ENCODE measurements at regions of chr12 and their contacts with region 1.

Region 1: DNA sequence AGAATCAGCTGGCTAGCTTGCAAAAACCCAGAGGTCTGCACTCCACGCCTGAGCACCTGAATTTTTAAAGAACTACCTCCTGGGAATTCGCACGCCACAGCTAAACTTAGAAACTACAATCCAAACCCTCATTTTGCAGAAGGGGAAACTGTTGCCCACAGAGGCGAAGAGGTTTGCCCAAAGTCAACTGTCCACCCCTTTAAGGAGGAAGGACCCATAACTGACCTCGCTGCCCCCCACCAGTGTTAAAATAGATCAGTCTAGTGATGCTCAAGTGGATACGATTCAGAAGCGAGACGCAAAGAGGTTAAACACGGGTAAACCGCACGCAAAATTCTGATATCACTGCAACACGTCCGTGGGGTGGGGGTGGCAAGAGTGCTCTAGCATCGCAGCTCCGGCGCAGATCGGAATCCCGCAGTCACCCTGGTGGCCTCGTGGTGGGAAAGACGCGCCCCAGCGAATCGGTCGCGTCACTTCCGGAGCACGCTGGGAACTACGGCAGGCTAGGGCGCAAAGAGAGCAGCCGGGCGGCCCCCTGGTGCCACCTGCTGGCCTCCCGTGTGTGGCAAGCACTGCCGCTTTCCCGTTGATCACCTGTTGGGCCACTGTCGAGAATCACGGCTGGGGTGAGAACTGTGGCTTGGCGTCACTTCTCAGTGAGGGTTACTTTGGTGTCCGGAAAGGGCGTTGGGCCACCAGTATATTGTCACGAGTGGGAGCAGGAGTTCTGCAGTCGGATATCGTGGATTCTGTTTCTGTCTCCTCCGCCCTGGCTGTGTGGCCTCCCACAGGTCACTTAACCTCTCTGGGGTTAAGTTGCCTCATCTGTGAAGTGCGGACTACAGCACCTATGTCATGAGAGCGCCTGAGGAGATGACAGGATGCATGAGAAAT is at the start of gene ALKBH2:
- DNase-seq: peak; percentile 89 to 99 (median 95)
- ATAC-seq: peak; percentile 77
- H3K4me3 ChIP-seq: peak within 1 kb of the TSS; percentile 63 to 78
- H3K4me3 Mint-ChIP-seq: peak within 1 kb of the TSS; percentile 83
- H3K27ac ChIP-seq: peak within 1 kb of the TSS; percentile 65 to 69
- H3K27ac Mint-ChIP-seq: peak within 1 kb of the TSS; percentile 91
- H3K4me1 ChIP-seq: peaks cover 27% of the 10 kb centered on the region
- H3K4me1 Mint-ChIP-seq: peaks cover 40% of the 10 kb centered on the region
- H3K27me3 ChIP-seq: no peaks in the 10 kb centered on the region
- H3K27me3 Mint-ChIP-seq: no peaks in the 10 kb centered on the region
- CTCF ChIP-seq: peak; percentile 94
- total RNA-seq, gene ALKBH2: 9.8 to 12.8 TPM

Region 2: GRCh38 chr12:107760809-107761501 is 1332.3 kb before region 1 on chr12 and contains the start of gene PRDM4:
- CTCF ChIA-PET with region 1: no interaction called
- POLR2A ChIA-PET with region 1: no interaction called
- intact Hi-C with region 1: loop called in 1 of 2 experiments (anchors 5 kb)
- DNase-seq: peak; percentile 76 to 97 (median 88)
- ATAC-seq: peak; percentile 95
- H3K4me3 ChIP-seq: peak within 1 kb of the TSS; percentile 76 to 82
- H3K4me3 Mint-ChIP-seq: peak within 1 kb of the TSS; percentile 89
- H3K27ac ChIP-seq: peak within 1 kb of the TSS; percentile 80 to 83
- H3K27ac Mint-ChIP-seq: peak within 1 kb of the TSS; percentile 90
- H3K4me1 ChIP-seq: peaks cover 31% of the 10 kb centered on the region
- H3K4me1 Mint-ChIP-seq: peaks cover 44% of the 10 kb centered on the region
- H3K27me3 ChIP-seq: no peaks in the 10 kb centered on the region
- H3K27me3 Mint-ChIP-seq: no peaks in the 10 kb centered on the region
- CTCF ChIP-seq: no peak
- total RNA-seq, gene PRDM4: 44.9 to 46.0 TPM

Region 3: DNA sequence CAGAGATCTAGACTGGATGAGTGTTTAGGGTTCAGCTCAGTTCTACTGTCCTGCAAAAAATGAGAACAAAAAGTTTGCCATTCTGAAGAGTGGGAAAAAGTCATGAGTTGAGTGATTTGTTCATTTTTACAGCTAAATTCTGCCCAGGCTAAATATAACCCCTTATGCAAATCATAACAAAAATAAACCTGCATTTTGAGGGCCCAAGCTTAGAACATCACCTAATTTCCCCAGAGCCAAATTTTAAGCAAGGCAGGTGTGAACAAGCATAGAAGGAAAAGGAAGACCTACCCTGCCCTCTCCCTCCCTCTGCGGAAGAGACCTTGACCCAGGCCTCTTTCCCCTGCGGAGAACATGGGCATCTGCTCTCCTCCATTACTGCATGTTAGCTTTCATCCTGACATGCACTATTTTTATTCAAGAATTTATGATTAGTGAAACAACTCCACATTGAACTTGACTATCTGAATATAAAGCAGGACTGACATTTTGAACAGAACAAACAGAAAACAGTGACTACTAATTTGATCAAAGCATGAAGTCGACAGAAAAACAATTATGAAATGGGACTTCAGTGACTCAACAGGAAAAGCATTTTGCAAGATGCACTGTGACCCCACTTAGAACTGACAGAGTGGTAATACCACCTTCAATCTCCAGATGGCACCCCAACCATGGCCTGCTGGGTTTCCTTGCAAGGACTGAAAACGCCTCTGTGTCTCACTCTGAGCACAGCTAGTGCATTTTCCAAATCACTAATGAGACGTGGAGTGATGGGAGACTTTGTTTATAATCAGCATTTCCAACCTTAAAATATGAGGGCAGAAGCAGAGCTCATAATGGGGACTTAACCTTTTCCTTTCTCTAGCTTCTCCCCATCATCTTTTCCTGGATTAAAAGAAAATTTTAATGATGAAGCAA is 428.7 kb before region 1 on chr12:
- CTCF ChIA-PET with region 1: interaction called, 5 read pairs
- POLR2A ChIA-PET with region 1: interaction called, 3 read pairs
- intact Hi-C with region 1: loop called (anchors 2 kb)
- DNase-seq: peak; percentile 70 to 89 (median 83)
- ATAC-seq: peak; percentile 100
- H3K4me3 ChIP-seq: no peak overlapping the region
- H3K4me3 Mint-ChIP-seq: no peak overlapping the region
- H3K27ac ChIP-seq: peak overlapping the region in 1 of 2 experiments; percentile 31
- H3K27ac Mint-ChIP-seq: peak overlapping the region; percentile 79
- H3K4me1 ChIP-seq: peaks cover 5% of the 10 kb centered on the region
- H3K4me1 Mint-ChIP-seq: peaks cover 15% of the 10 kb centered on the region
- H3K27me3 ChIP-seq: no peaks in the 10 kb centered on the region
- H3K27me3 Mint-ChIP-seq: no peaks in the 10 kb centered on the region
- CTCF ChIP-seq: peak; percentile 92

Region 4: DNA sequence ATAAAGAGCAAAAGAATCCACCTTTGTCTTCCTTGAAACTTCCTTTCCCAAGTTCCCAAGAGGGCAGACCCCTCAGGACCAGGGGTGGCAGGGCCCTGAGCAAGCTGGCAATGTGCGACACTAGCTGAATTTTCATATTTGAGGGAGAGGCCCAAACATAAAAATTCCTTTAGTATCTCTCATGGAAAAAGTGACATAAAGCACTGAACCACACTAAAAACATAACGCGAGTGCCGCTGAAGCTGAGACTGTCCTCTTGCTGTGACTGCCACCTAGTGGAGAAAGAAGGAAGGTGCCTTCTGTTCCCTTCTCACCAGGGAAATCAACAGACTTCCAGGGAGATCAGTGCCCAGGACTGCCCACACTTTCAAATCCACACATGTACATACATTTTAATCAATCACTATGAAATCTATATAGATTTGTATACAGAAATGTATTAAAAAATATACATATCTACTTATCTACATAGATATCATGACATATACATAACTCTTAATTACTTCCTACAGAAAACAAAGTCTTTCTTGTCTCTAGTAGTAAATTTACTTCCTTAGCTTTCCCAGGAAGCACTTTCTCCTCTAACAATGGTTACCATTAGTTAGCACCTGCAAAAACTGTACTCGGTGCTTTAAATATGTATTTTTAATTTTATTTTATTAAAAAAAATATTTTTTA is 289.7 kb before region 1 on chr12:
- CTCF ChIA-PET with region 1: interaction called, 7 read pairs
- POLR2A ChIA-PET with region 1: no interaction called
- intact Hi-C with region 1: loop called (anchors 1 kb)
- DNase-seq: peak; percentile 44 to 84 (median 68)
- ATAC-seq: peak; percentile 95
- H3K4me3 ChIP-seq: no peak overlapping the region
- H3K4me3 Mint-ChIP-seq: no peak overlapping the region
- H3K27ac ChIP-seq: no peak overlapping the region
- H3K27ac Mint-ChIP-seq: peak overlapping the region; percentile 14
- H3K4me1 ChIP-seq: no peaks in the 10 kb centered on the region
- H3K4me1 Mint-ChIP-seq: peaks cover 4% of the 10 kb centered on the region
- H3K27me3 ChIP-seq: no peaks in the 10 kb centered on the region
- H3K27me3 Mint-ChIP-seq: no peaks in the 10 kb centered on the region
- CTCF ChIP-seq: peak; percentile 94

Region 5: DNA sequence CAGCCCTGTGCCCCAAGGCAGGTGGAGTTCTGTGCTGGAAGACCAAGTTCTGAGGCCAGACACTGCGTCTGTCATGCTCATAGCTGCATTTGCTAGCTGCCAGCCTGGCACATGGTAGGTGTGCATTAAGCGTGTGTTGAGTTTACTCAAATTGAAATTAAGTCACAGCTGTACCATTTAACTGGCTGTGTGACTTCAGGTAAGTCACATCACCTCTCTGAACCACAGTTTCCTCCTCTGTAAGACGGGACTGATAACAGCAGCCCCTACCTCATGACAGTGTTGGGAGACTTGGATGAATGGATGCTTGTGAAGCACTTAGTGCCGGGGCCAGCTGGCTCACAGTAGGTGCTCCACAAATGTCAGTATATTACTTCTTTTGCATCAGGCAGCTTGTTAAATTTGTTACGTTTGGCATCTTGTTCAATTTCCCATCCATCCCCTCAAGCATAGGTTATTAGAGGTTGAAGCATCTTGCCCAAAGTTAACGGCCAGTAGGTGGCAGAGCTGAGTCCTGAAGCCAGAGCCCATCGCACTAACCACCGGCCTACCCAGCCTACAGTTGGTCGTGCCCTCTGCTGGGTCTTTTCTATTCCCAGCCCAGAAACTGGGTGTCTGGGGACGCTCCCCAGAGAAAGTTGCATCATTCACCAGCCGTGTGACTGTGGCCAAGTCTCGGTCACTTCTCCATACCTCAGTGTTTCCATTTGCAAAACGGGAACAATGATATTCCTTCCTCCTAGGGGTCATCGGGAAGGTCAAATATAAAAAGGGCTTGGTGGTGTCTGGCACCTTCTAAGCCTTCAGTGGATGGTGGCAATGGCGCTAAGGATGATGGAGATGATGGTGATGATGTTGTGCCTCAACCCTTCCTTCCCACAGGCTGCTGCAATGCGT is 208.9 kb before region 1 on chr12:
- CTCF ChIA-PET with region 1: interaction called, 46 read pairs
- POLR2A ChIA-PET with region 1: no interaction called
- intact Hi-C with region 1: loop called (anchors 1 kb)
- DNase-seq: peak; percentile 39 to 74 (median 62)
- ATAC-seq: peak; percentile 70
- H3K4me3 ChIP-seq: no peak overlapping the region
- H3K4me3 Mint-ChIP-seq: no peak overlapping the region
- H3K27ac ChIP-seq: no peak overlapping the region
- H3K27ac Mint-ChIP-seq: no peak overlapping the region
- H3K4me1 ChIP-seq: no peaks in the 10 kb centered on the region
- H3K4me1 Mint-ChIP-seq: no peaks in the 10 kb centered on the region
- H3K27me3 ChIP-seq: no peaks in the 10 kb centered on the region
- H3K27me3 Mint-ChIP-seq: peaks cover 4% of the 10 kb centered on the region
- CTCF ChIP-seq: peak; percentile 39

Region 6: GRCh38 chr12:108964371-108965352 is 128.6 kb before region 1 on chr12:
- CTCF ChIA-PET with region 1: no interaction called
- POLR2A ChIA-PET with region 1: no interaction called
- intact Hi-C with region 1: no loop called
- DNase-seq: no peak
- ATAC-seq: no peak
- H3K4me3 ChIP-seq: no peak overlapping the region
- H3K4me3 Mint-ChIP-seq: no peak overlapping the region
- H3K27ac ChIP-seq: no peak overlapping the region
- H3K27ac Mint-ChIP-seq: no peak overlapping the region
- H3K4me1 ChIP-seq: no peaks in the 10 kb centered on the region
- H3K4me1 Mint-ChIP-seq: no peaks in the 10 kb centered on the region
- H3K27me3 ChIP-seq: no peaks in the 10 kb centered on the region
- H3K27me3 Mint-ChIP-seq: peaks cover 6% of the 10 kb centered on the region
- CTCF ChIP-seq: no peak

Region 7: GRCh38 chr12:109052414-109053323 is 40.6 kb before region 1 on chr12 and contains the start of gene USP30:
- CTCF ChIA-PET with region 1: interaction called, 4 read pairs
- POLR2A ChIA-PET with region 1: no interaction called
- intact Hi-C with region 1: loop called (anchors 1 kb)
- DNase-seq: peak; percentile 73 to 93 (median 85)
- ATAC-seq: peak; percentile 74
- H3K4me3 ChIP-seq: peak within 1 kb of the TSS; percentile 85 to 90
- H3K4me3 Mint-ChIP-seq: peak within 1 kb of the TSS; percentile 89
- H3K27ac ChIP-seq: peak within 1 kb of the TSS; percentile 68 to 91
- H3K27ac Mint-ChIP-seq: peak within 1 kb of the TSS; percentile 96
- H3K4me1 ChIP-seq: peaks cover 7% of the 10 kb centered on the region
- H3K4me1 Mint-ChIP-seq: peaks cover 21% of the 10 kb centered on the region
- H3K27me3 ChIP-seq: no peaks in the 10 kb centered on the region
- H3K27me3 Mint-ChIP-seq: no peaks in the 10 kb centered on the region
- CTCF ChIP-seq: no peak
- total RNA-seq, gene USP30: 28.2 to 33.1 TPM

Region 8: DNA sequence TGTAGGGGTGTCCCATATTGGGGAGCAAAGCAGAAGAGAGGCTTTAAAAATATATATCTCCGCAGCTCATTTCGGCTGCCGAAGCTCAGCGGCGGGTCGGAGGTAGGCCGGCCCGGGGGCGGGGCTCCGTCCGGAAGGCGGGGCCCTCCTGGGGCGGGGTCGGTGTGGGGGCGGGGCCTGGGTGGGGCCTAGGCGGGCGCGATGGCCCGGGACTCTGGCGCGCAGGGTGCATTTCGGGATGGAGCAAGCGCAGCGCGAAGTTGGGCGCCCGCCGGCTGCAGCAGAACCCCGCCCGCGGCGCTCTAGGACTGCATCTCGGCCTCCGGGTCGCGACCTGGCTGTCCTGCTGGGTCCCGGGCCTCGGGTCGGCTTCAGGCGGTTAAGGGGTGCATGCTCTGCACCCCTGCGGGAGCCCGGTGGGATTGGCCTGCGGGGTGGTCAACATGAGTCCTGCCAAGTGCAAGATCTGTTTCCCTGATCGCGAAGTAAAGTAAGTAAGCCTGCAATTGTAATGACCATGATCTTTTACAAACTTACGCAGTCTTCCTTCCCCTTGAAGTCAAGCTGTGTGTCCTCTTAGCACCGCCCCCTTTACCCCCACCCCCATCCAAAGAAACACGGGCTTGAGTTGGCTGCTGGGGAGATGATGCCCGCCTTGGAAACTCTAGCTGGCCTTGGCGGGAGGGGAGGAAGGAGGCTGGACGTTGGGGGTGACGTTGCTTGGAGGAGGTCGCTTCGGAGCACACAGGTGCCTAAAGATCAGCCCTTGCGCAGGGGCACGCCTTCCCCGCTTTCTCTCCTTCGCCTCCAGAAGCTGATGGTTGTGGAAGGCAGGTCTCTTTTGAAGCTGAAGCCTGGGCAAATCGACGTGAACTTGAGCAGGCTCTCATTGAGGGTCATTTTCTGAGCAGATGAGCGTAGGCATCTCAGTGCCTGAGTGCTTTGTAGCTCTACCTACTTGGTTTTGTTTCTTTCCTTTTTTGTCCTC is 61.5 kb after region 1 on chr12:
- CTCF ChIA-PET with region 1: no interaction called
- POLR2A ChIA-PET with region 1: interaction called, 3 read pairs
- intact Hi-C with region 1: loop called (anchors 1 to 2 kb)
- DNase-seq: peak; percentile 60 to 89 (median 78)
- ATAC-seq: peak; percentile 98
- H3K4me3 ChIP-seq: peak overlapping the region; percentile 60 to 80
- H3K4me3 Mint-ChIP-seq: peak overlapping the region; percentile 95
- H3K27ac ChIP-seq: peak overlapping the region; percentile 22 to 46
- H3K27ac Mint-ChIP-seq: peak overlapping the region; percentile 89
- H3K4me1 ChIP-seq: peaks cover 20% of the 10 kb centered on the region
- H3K4me1 Mint-ChIP-seq: peaks cover 17% of the 10 kb centered on the region
- H3K27me3 ChIP-seq: no peaks in the 10 kb centered on the region
- H3K27me3 Mint-ChIP-seq: peaks cover 3% of the 10 kb centered on the region
- CTCF ChIP-seq: no peak

Measured in CD8-positive, alpha-beta T cell (primary cell).